PC-3 (cell line): ENCODE measurements at regions of chr2 and their contacts with region 1.

Region 1: GRCh38 chr2:240998120-240998994 is at the start of gene SNED1:
- DNase-seq: peak; percentile 75
- ATAC-seq: peak; percentile 89
- H3K4me3 ChIP-seq: peak within 1 kb of the TSS; percentile 72
- H3K27ac ChIP-seq: no peak within 1 kb of the TSS
- H3K4me1 ChIP-seq: 0 out of 2 replicates have a peak, but pooled peaks cover 3% of the 10 kb centered on the region
- H3K27me3 ChIP-seq: no peaks in the 10 kb centered on the region
- CTCF ChIP-seq: no peak
- total RNA-seq, gene SNED1: 0.40 and 0.66 TPM in 2 replicates

Region 2: DNA sequence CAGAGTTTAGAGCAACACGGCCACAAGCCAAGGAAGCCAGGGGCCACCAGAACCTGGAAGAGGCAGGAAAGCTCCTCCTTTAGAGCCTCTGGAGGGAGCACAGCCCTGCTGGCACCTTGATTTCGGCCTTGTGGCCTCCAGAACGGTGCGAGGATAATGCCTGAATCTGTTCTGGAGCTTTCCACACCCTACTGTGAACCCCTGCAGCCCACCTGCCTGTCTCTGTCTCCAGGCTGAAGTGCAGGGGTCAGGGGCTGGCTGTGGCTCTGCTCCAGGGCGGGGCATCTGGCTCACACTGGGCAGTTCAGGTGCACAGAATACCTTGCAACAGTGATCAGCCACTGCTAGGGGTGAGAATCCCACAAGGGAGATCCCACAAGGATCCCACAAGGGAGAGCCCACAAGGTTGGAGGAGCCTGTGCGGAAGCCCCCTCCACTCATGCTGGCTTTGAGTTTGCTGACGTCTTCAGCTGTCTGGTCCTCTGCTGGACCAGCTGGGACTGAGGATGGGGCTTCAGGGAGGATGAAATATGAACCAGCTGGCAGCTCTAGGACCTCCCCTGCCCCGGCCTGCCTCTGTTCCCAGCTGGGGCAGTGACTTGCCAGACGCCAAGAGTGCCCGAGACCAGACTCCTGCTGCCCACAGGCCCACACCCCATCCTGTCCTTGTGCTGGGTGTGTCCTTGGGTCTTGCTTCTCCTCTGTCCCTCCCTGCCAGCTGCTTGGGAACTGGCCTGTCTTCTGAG is 801.5 kb before region 1 on chr2:
- CTCF ChIA-PET with region 1: no interaction called
- POLR2A ChIA-PET with region 1: no interaction called
- intact Hi-C with region 1: no loop called
- DNase-seq: no peak
- ATAC-seq: no peak
- H3K4me3 ChIP-seq: no peak overlapping the region
- H3K27ac ChIP-seq: no peak overlapping the region
- H3K4me1 ChIP-seq: no peaks in the 10 kb centered on the region
- H3K27me3 ChIP-seq: peaks cover 71% of the 10 kb centered on the region
- CTCF ChIP-seq: no peak

Region 3: DNA sequence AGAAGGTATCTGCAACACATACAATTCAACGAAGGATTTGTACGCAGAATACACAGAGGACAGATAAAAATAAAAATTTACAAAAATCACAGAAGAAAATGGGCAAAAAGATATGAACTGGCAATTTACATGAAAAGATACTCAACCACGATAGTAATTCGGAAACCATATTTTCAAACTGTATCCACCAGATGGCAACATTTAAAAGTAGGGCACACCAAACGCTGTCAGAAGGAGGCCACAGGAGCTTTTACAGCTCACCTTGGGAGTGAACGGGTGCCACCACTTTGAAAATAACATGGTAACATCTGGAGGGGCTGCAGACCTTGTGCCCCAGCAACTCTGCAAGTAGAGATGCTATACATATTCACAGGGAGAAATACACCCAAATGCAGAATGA is 188.2 kb before region 1 on chr2:
- CTCF ChIA-PET with region 1: no interaction called
- POLR2A ChIA-PET with region 1: no interaction called
- intact Hi-C with region 1: no loop called
- DNase-seq: peak; percentile 44
- ATAC-seq: no peak
- H3K4me3 ChIP-seq: no peak overlapping the region
- H3K27ac ChIP-seq: no peak overlapping the region
- H3K4me1 ChIP-seq: no peaks in the 10 kb centered on the region
- H3K27me3 ChIP-seq: peaks cover 16% of the 10 kb centered on the region; the same call in 1 of the 2 replicates
- CTCF ChIP-seq: peak; percentile 53

Region 4: GRCh38 chr2:240913810-240914644 is 84.3 kb before region 1 on chr2:
- CTCF ChIA-PET with region 1: no interaction called
- POLR2A ChIA-PET with region 1: no interaction called
- intact Hi-C with region 1: loop called (anchors 10 kb)
- DNase-seq: peak; percentile 54
- ATAC-seq: peak; percentile 65
- H3K4me3 ChIP-seq: no peak overlapping the region
- H3K27ac ChIP-seq: no peak overlapping the region
- H3K4me1 ChIP-seq: peaks cover 12% of the 10 kb centered on the region
- H3K27me3 ChIP-seq: no peaks in the 10 kb centered on the region
- CTCF ChIP-seq: peak; percentile 91